Tibial artery (tissue), 4 donors: ENCODE measurements at regions of chr6 and their contacts with region 1.

Region 1: DNA sequence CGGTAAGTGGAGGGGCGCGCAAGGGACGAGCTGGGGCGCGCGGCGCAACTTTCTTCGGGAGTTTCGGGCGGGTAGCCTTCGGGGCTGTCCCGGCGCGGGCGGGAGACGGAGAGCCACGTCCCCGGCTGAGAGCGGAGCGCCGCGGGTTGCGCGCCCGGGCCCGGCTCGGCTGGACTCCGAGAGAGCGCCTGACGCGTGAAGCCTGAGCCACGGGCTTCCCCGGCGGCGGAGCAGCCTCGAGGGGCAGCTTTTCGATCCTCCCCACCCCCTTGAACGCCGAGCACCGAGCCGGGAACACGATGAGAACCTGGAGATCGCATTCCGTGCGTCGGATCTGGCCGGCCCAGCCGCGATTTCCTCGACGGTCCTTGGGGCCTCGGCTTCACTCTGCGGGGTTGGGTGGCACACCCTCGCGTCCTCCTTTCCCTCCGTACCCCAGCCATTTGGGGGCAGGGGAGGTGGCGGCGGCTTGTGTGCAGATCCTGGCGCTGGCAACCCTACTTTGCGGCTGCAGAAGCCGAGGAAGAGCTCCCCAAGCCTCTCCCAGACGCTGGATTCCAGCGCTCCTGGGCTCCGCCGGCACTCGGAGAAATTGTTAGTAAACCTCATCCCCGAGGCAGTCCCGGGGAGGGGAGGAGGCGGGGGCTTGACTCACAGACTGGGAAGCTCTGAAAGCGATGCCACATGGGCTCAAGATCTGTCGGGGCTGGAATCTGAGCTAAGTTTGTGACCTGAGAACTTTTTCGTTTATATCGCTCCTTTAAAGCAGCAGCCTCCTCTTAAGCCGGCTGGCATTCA is 572 bp downstream of the DSE start:
- DNase-seq: peak; percentile 88
- H3K4me3 ChIP-seq: peak overlapping the region; percentile 90 to 93
- H3K27ac ChIP-seq: peak overlapping the region; percentile 94 to 98
- H3K4me1 ChIP-seq: peaks cover 0 to 9% (median 4%) of the 10 kb centered on the region in 4 donors
- H3K27me3 ChIP-seq: no peaks in the 10 kb centered on the region
- CTCF ChIP-seq: no peak

Region 2: DNA sequence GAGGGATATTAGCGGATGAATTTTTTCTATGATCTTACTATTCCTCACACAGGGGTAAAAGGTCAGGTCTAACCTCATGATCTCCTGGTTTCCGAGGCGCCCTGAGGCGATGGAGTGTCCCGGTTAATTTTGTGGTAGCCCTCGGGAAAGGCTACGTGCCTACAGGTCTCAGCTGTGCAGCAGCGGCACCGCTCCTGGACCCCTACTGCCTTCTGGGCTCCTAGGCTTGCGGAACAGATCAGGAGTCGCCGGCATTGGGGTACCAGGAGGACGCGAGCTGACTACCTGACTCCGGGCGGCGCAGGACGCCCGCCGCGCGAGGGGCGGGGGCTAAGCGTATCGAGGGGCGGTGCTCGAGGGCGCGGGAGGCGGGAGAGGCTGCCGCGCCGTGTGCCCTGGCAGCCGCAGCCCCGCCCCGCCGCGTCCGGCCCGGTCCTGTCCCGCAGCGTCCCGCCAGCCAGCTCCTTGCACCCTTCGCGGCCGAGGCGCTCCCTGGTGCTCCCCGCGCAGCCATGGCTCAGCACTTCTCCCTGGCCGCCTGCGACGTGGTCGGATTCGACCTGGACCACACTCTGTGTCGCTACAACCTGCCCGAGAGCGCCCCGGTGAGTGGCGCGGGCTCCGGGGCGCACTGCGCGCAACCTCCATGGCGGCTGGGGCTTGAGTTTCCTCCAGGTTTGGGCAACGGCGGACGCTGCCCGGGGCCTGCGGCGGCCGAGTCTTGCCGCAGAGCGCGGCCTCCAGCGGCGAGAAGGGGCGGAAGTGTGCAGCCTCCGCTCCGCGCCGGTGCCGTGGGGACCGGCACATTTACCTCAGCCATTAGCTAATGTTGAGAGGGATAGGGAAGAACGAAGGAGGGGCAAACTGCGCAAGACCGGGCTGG is 270.7 kb before region 1 on chr6 and contains the start of gene NT5DC1:
- intact Hi-C with region 1: no loop called
- DNase-seq: peak; percentile 84 to 93
- H3K4me3 ChIP-seq: peak within 1 kb of the TSS; percentile 57 to 86
- H3K27ac ChIP-seq: peak within 1 kb of the TSS; percentile 82 to 98
- H3K4me1 ChIP-seq: peaks cover 0 to 53% (median 39%) of the 10 kb centered on the region in 4 donors
- H3K27me3 ChIP-seq: no peaks in the 10 kb centered on the region
- CTCF ChIP-seq: peak; percentile 16 to 36

Region 3: GRCh38 chr6:116352515-116353471 is 18.5 kb before region 1 on chr6:
- intact Hi-C with region 1: no loop called
- DNase-seq: peak in 1 of 2 donors; percentile 38
- H3K4me3 ChIP-seq: no peak overlapping the region
- H3K27ac ChIP-seq: peak overlapping the region; percentile 45 to 59
- H3K4me1 ChIP-seq: peaks cover 0 to 29% (median 8%) of the 10 kb centered on the region in 4 donors
- H3K27me3 ChIP-seq: no peaks in the 10 kb centered on the region
- CTCF ChIP-seq: no peak

Region 4: DNA sequence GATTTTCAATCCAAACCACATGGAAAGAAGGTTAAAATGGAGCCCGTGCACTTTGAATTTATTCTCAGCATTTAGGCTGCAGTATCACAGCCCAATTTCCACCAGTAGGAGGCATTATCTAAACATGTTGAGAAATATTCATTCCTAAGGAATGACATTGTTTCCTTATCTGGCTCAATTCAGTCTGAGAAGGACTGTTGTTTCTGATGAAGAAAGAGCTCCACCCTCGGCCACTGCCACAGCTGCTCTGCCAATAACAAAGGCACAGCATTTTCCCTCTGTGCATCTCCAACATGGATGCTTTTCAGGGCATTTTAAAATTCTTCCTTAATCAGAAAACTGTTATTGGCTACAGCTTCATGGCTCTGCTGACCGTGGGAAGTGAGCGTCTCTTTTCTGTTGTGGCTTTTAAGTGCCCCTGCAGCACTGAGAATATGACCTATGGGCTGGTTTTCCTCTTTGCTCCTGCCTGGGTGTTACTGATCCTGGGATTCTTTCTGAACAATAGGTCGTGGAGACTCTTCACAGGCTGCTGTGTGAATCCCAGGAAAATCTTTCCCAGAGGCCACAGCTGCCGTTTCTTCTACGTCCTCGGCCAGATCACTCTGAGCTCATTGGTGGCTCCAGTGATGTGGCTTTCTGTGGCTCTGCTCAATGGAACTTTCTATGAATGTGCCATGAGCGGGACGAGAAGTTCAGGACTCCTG is 140.2 kb after region 1 on chr6 and contains the start of gene CALHM5:
- intact Hi-C with region 1: loop called (anchors 10 kb)
- DNase-seq: peak; percentile 55 to 74
- H3K4me3 ChIP-seq: peak within 1 kb of the TSS; percentile 55 to 63
- H3K27ac ChIP-seq: peak within 1 kb of the TSS; percentile 83 to 92
- H3K4me1 ChIP-seq: peaks cover 0 to 28% (median 6%) of the 10 kb centered on the region in 4 donors
- H3K27me3 ChIP-seq: no peaks in the 10 kb centered on the region
- CTCF ChIP-seq: peak; percentile 72 to 79